Activated CD8-positive, alpha-beta memory T cell treated with anti-CD3 and anti-CD28 coated beads, Interleukin-2, amount 10 ng/mL, durations not matched to agents 7 days and 5 days (primary cell): ENCODE measurements at regions of chr3 and their contacts with region 1.

Region 1: GRCh38 chr3:111967651-111968274 is 11.1 kb upstream of the ABHD10 start:
- DNase-seq: peak; percentile 88
- ATAC-seq: peak; percentile 90
- H3K4me3 Mint-ChIP-seq: no peak overlapping the region
- H3K27ac Mint-ChIP-seq: peak overlapping the region; percentile 5
- H3K4me1 Mint-ChIP-seq: peaks cover 13% of the 10 kb centered on the region
- H3K27me3 Mint-ChIP-seq: no peaks in the 10 kb centered on the region

Region 2: GRCh38 chr3:111668912-111669488 is 298.8 kb before region 1 on chr3:
- CTCF ChIA-PET with region 1: interaction called, 28 read pairs
- DNase-seq: no peak
- ATAC-seq: peak; percentile 40
- H3K4me3 Mint-ChIP-seq: no peak overlapping the region
- H3K27ac Mint-ChIP-seq: peak overlapping the region; percentile 75
- H3K4me1 Mint-ChIP-seq: peaks cover 84% of the 10 kb centered on the region
- H3K27me3 Mint-ChIP-seq: no peaks in the 10 kb centered on the region

Region 3: DNA sequence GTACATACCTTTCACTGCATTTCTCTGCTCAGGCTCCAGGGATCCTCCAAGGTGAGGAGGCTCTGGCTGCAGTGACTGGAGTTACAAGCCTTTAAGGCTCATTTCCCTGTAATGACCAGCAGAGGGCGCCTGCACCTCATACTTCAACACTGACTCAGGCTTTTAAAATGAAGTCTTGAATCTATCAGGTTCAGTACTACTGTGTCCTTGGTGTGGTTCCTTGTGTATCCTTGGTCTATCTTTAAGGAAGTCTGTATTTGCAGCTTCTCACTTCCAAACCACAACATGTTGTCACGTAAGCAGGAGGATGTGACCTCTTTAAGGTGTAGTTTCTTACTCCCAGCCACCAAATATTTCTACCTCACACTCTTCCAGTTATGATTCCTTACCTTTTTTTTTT is 250.2 kb before region 1 on chr3:
- CTCF ChIA-PET with region 1: interaction called, 137 read pairs
- DNase-seq: peak; percentile 79
- ATAC-seq: peak; percentile 89
- H3K4me3 Mint-ChIP-seq: no peak overlapping the region
- H3K27ac Mint-ChIP-seq: no peak overlapping the region
- H3K4me1 Mint-ChIP-seq: peaks cover 7% of the 10 kb centered on the region
- H3K27me3 Mint-ChIP-seq: no peaks in the 10 kb centered on the region

Region 4: DNA sequence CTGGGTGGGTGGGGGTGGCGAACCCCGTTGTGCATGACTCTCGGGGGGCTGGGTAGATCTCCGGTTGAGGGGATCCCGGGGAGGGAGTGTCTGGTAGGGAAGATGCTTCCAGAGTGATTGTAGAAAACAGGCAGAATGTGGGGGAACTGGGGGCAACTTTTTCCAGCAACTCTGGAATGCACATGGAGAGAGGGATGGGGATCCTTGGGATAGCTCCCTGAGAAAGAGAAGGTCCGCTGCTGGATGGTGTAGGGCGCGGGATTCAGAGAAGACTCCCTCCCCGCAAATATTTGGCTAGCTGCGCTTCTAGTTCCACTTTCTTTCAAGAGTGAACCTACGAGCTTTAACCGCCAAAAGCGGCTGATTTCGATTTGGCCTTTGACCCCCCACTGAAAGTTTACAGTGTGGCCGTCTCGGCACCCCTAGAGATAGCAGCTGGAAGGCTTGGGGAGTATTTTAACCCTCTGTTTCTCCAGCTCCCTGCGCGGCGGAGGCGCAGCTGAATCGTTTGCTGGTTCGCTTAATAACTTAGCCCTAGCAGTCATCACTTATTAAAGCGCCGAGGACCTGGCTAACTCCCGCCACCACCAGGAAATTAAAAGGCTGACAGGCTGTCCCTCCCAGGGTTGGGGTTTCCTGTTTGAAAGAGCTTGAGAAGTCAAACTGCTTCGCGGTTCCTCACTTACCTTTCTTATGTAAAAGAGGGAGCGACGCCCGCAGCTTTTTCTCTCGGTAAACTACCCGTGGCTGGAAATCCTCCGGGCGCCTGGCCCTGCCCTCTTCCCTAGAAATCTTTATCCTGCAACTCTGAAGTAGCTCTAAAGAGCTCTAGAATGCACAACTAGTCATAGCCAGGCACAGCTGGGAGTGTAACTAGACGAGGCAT is 107.5 kb before region 1 on chr3:
- CTCF ChIA-PET with region 1: interaction called, 15 read pairs
- DNase-seq: peak; percentile 84
- ATAC-seq: peak; percentile 75
- H3K4me3 Mint-ChIP-seq: peak overlapping the region; percentile 91
- H3K27ac Mint-ChIP-seq: peak overlapping the region; percentile 77
- H3K4me1 Mint-ChIP-seq: peaks cover 16% of the 10 kb centered on the region
- H3K27me3 Mint-ChIP-seq: peaks cover 33% of the 10 kb centered on the region

Region 5: DNA sequence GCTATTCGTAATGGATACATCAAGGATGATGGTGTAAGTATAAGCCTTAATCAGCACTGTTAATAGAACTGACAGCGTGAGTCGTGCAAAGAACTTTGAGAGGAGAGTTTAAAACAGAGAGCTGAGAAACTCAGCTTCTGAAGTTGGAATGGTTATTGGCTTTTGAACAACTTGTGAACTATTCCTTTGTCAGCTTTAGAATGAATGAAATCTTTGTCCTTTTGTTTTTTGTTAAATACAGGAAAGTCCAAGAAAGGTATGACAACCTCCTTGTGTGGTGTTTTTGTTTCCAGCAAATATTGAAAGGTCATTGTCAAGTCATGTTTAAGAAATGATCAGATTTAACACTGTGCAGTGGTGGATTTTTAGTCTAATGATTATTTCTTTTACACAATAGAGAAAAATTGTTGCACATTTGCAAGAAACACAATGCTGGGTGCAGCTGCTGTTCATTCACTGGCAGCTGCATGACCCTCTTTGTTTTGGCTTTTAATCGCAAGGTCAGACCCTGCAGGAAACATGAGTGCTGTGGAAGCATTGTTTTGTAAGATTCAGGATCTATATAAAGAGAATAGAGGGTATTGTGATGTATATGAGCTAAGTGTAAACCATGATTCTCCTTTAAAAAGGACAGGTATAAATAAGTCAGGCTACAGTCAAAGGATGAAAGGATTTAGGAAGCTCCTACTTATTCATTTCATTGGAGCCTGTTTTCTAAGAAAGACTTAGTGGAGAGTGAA is 10.6 kb before region 1 on chr3:
- CTCF ChIA-PET with region 1: interaction called, 11 read pairs
- DNase-seq: no peak
- ATAC-seq: no peak
- H3K4me3 Mint-ChIP-seq: no peak overlapping the region
- H3K27ac Mint-ChIP-seq: no peak overlapping the region
- H3K4me1 Mint-ChIP-seq: peaks cover 6% of the 10 kb centered on the region
- H3K27me3 Mint-ChIP-seq: no peaks in the 10 kb centered on the region

Region 6: DNA sequence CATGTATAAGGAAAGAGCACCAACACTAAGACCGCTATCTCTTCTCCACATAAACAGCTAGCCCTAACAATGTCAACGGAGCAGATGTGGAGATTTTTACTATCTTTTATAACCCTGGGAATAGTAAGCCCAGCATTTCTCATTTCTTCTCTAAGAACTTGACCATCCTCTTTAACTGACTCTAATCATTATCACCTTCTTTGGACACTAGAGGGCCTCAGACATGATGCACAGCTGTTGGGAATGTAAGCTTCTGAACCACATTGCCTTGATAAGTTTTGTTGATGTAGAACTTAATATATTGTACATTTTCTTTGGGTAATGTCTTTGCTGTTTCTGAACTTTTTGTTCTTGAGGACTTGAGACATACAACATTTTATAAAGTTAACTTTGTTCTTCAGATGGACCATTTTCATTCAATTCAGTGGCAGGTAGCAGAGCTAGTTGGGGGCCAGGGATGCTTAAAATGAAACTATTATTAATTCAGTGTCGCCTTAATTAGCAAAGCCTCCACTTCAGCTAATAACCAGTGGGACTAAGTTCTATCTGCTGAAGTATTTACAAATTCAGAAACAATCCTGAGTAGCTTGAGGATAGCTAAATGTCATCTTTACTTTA is 21.4 kb after region 1 on chr3:
- CTCF ChIA-PET with region 1: interaction called, 12 read pairs
- DNase-seq: no peak
- ATAC-seq: peak; percentile 80
- H3K4me3 Mint-ChIP-seq: no peak overlapping the region
- H3K27ac Mint-ChIP-seq: no peak overlapping the region
- H3K4me1 Mint-ChIP-seq: peaks cover 33% of the 10 kb centered on the region
- H3K27me3 Mint-ChIP-seq: no peaks in the 10 kb centered on the region